Stomach (tissue), 19 donors: ENCODE measurements at regions of chr11 and their contacts with region 1.

Region 1: GRCh38 chr11:118907051-118908042 is 18.4 kb downstream of the BCL9L start:
- DNase-seq: peak; percentile 92 to 94
- H3K4me3 ChIP-seq: peak overlapping the region in 1 of 4 donors; percentile 6
- H3K27ac ChIP-seq: peak overlapping the region; percentile 55 to 99 (median 69)
- H3K4me1 ChIP-seq: peaks cover 56 to 67% (median 57%) of the 10 kb centered on the region in 4 donors
- H3K27me3 ChIP-seq: no peaks in the 10 kb centered on the region
- CTCF ChIP-seq: peak in 6 of 7 experiments; percentile 70 to 97 (median 94)
- EP300 ChIP-seq: no peak
- POLR2A ChIP-seq: no peak

Region 2: DNA sequence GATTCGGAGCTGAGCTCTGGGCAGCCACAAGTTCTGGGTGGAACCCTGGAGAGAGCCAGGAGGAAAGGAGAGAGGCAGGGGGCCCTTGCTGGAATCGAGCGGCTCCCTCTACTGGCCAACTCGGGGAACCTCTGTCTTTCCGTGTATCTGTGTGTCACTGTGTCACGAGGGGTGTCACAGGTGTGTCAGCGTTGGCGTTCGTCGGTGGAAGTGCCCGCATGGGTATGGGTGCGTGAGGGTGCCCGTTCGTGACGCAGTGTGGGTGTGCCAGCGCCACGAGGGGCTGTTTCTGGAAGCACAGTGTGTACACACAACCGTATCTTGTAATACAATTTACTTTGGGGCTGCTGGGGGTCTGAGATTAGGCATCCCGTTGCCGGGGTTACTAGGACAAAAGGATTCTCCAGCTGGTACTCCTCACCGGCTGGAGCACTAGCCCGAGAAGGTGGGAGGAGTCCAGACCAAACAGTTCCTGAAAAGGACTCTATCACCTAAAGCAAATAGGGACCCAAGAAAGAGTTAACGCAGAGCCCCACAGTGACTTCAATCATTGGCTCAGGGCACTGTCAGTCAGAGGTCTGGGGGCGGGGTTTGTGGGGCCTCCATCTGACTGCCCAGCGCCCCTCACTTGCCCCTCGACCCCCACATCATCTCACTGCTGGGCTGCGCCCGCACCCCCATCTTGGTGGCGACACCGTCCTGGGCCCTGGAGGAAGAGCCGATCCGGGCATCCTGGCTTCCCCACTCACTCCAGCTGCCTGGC is 20.9 kb after region 1 on chr11:
- intact Hi-C with region 1: loop called (anchors 2 kb)
- DNase-seq: peak; percentile 94 to 97
- H3K4me3 ChIP-seq: peak overlapping the region; percentile 65 to 84 (median 75)
- H3K27ac ChIP-seq: peak overlapping the region; percentile 92 to 99 (median 97)
- H3K4me1 ChIP-seq: peaks cover 38 to 68% (median 61%) of the 10 kb centered on the region in 4 donors
- H3K27me3 ChIP-seq: no peaks in the 10 kb centered on the region
- CTCF ChIP-seq: peak in 6 of 7 experiments; percentile 61 to 99 (median 92)
- EP300 ChIP-seq: no peak
- POLR2A ChIP-seq: no peak